HEK293 (cell line): ENCODE measurements at regions of chr18 and their contacts with region 1.

Region 1: DNA sequence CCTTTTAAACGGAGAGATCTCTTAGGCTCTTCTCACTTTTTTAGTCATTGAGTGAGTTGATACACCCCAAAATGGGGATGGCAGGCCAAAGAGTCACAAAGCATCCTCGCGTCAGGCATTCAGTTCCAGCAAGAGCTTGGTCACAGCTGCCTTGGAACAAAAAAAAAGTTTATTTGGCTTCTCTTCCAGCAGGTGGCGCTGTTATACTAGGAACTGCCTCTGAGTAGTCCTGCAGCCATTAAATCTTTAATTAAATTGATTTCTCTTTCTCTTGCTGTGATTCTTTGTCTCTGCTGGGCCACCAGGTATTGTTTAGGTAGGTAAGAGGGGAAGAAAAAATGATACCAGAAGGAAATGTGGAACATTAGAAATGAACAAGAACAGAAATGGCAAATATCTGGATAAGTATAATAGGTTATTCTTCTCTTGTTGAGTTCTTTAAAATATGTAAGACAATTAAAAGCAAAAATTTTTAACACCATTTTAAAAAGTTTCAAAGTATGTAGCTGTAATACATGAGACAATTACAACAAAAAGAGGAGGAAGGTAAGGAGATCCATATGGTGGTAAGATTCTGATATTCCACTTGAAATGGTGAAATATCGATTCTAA is 175.1 kb downstream of the GALNT1 start:
- H3K4me3 ChIP-seq: no peak overlapping the region
- H3K27ac ChIP-seq: no peak overlapping the region
- H3K4me1 ChIP-seq: no peaks in the 10 kb centered on the region
- CTCF ChIP-seq: peak; percentile 68

Region 2: GRCh38 chr18:35949903-35950627 is 193.5 kb after region 1 on chr18:
- CTCF ChIA-PET with region 1: interaction called, 20 read pairs
- POLR2A ChIA-PET with region 1: no interaction called
- H3K4me3 ChIP-seq: peak overlapping the region; percentile 52
- H3K27ac ChIP-seq: no peak overlapping the region
- H3K4me1 ChIP-seq: no peaks in the 10 kb centered on the region
- CTCF ChIP-seq: peak; percentile 62

Region 3: GRCh38 chr18:36095936-36096519 is 339.4 kb after region 1 on chr18:
- CTCF ChIA-PET with region 1: interaction called, 12 read pairs
- POLR2A ChIA-PET with region 1: no interaction called
- H3K4me3 ChIP-seq: no peak overlapping the region
- H3K27ac ChIP-seq: no peak overlapping the region
- H3K4me1 ChIP-seq: no peaks in the 10 kb centered on the region
- CTCF ChIP-seq: peak; percentile 48; the same call in 1 of the 2 replicates

Region 4: DNA sequence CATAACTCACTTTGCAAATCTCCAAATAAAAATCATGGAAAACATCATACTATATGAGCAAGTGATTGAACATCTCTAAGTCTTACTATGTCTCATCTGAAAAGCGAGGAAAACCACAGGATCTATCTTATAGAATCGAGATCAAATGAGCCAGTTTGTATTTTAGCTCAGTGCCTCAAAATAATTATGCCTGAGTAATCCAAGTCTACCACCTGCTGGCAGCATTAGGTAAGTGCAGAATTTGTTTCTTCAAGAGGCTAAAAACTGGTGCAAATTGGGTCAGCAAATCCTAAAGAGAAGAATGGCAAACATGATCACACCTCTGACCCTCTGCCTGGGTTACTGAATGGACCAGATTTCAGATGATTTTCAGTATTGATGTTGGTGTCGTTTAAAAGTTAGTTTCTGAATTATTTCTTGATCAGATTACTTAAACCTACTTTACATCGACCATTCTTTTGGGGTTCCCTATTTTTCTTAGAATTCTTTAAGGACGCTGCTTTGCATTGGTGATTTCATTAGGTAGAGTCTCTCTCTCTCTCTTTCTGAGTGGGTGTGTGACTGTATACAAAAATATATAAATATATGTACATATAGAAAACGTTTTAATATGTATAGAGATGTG is 528.2 kb after region 1 on chr18:
- CTCF ChIA-PET with region 1: interaction called, 14 read pairs
- POLR2A ChIA-PET with region 1: no interaction called
- H3K4me3 ChIP-seq: no peak overlapping the region
- H3K27ac ChIP-seq: no peak overlapping the region
- H3K4me1 ChIP-seq: no peaks in the 10 kb centered on the region
- CTCF ChIP-seq: peak; percentile 80; the same call in 1 of the 2 replicates